Sciatic nerve (tissue), 2 donors: ENCODE measurements at regions of chr4 and their contacts with region 1.

Region 1: DNA sequence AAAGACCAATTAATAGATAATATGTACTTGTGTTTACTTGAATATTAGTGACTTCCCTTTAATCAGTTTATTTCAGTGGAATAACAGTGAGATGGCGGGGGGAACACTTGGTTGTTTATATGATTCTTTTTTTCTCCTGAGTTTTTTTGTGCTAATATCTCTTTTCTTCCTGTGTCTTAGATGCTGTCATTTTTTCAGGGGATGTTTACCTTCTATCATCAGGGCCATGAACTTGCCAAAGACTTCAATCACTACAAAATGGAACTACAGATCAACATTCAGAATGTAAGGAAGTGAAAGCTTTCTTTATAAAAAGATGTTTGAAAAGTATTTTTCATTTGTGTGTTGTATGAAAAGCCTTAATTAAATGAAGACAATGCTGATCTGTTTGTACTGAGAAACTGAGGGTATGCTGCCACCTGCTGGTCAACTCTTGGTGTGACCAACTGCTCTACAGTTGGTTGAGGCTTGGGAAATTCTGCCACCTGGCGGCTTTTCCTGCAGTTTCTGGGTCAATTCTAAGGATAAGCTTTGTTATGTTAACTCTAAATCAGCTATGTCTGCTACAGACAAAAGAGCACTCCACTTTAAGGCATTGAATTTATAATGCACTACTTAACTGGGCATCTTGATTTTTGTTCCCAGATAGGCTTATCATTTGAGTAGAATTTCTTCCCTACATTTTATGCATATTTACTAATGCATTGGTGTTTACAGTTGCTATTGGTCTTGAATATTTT is 134.8 kb downstream of the ARHGAP10 start:
- DNase-seq: peak; percentile 99
- ATAC-seq: peak; percentile 82

Region 2: GRCh38 chr4:147707865-147708672 is 158.6 kb before region 1 on chr4:
- intact Hi-C with region 1: loop called (anchors 5 kb)
- DNase-seq: peak; percentile 71
- ATAC-seq: peak; percentile 80

Region 3: DNA sequence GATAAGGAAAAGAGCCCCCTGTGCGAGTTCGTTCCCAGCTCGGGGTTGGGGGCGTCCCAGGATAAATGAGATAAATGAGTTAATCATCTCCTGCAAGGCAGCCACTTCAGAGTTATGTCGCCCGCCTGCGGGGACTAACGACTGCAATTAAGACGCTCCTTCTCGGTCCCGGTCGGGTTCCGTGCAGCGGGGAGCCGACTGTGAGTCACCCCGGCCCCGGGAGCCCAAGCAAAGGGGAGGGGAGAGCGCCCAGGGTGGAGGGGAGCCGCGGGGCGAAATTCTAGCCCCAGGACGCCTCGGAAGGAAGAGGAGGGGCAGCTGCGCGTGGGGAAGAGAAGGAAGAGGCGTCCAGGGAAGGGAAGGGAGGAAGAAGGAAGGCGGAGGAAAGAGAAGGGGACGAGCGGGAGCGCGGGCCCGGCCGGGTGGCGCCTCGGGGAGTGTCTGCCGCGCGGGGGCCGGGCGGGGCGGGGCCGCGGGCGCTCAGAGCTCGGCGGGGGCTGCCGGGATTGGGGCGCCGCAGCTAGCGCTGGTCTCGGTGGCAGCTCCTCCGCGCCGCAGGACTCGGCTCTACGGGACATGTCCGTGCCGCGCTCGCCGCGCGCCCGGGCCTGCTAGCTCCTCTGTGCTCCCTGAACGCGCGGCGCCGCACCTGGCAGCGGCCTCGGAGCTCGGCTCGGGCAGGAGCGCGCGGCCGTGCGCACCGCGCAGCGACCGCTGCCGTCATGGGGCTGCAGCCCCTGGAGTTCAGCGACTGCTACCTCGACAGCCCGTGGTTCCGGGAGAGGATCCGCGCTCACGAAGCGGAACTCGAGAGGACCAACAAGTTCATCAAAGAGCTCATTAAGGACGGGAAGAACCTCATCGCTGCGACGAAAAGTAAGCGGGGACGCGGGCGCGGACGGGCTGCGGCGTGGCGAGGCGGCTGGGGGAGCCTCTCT is 134.9 kb before region 1 on chr4 and contains the start of gene ARHGAP10:
- intact Hi-C with region 1: loop called (anchors 10 kb)
- DNase-seq: peak; percentile 84
- ATAC-seq: peak; percentile 82
- total RNA-seq, gene ARHGAP10: 89.2 TPM